Astrocyte of the cerebellum (primary cell): ENCODE measurements at regions of chr1 and their contacts with region 1.

Region 1: GRCh38 chr1:22814176-22815042 is 103.8 kb downstream of the EPHB2 start:
- DNase-seq: no peak
- H3K4me3 ChIP-seq: no peak overlapping the region
- CTCF ChIP-seq: no peak

Region 2: DNA sequence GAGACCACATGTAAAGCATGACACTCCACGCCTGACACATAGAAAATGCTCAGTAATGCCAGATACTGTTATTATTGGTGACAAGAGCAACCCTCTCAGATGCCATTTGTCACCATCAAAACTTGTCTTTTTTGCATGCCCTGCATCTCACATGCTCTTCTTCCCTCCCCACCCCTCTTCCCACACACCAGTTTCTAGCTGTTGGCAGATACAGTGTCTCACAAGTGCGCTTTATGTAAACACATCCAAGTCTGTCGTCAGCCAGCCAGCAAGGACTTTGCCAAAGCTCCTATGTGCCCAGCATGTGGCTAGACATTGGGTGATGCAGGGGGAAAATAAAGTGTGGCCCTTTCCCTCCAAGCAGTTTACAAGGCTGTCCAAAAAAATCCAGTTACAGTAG is 296.0 kb before region 1 on chr1:
- in situ Hi-C with region 1: no loop called
- DNase-seq: no peak
- H3K4me3 ChIP-seq: no peak overlapping the region
- CTCF ChIP-seq: no peak

Region 3: DNA sequence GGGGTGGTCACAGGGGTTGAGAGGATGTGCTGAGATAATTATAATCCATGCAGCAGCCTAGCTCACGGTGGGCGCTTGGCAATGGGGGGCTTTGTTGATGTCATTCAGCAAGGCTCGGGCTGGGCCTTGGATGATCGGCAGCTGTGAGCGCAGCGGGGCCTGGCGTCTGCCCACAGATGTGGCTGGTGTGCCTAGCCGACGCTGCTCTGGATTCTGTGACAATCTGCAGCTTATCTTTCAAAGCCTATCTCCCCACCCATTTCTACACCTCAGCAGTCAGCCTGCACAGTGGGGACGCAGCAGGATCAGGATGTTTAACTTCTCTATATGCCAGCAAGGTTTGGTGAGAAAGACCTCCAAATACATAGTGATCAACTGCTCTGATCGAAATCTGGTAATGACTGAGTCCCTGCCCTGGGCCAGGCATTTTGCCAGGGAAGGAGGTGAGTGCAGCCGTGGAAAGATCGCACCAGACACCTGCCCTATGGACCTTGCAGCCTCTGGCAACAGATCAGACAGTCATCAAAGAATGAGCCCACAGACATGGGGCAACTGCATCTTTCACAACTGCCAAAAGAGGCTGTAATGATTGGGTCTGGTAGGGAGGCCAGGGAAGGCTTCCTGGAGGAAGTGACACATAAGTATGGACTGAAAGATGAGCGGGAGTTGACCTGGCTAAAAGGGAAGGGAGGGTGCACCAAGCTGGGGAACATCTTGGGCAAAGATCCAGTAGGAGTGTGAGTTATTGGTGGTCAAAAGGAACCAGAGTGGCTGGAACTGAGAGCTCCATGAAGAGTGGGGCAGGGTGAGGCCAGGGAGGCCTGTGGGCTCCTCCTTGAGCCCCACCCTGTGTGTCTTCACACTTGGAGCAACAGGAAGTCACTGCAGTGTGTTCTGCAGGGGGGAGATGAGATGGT is 68.5 kb before region 1 on chr1:
- in situ Hi-C with region 1: no loop called
- DNase-seq: no peak
- H3K4me3 ChIP-seq: no peak overlapping the region
- CTCF ChIP-seq: no peak

Region 4: DNA sequence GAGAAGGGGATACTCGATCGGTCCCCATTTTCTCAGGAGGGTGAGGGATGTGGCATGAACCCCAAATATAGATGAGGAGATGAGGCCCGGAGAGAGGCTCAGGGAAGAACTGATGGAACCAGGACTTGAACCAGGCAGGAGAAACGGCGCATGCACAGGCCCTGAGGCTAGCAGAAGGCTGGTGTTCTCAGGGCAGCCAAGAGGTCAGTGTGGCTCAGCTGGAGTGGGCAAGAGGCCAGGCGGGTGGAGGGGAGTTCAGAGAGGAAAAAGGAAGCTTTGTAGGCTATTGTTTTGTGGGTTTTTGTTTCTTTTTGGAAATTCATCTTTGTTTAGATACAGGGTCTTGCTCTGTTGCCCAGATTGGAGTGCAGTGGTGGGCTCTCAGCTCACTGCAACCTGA is 36.3 kb after region 1 on chr1:
- in situ Hi-C with region 1: loop called (anchors 5 kb)
- DNase-seq: no peak
- H3K4me3 ChIP-seq: no peak overlapping the region
- CTCF ChIP-seq: no peak

Region 5: GRCh38 chr1:22861764-22862440 is 47.5 kb after region 1 on chr1:
- in situ Hi-C with region 1: no loop called
- DNase-seq: peak; percentile 32
- H3K4me3 ChIP-seq: no peak overlapping the region
- CTCF ChIP-seq: peak; percentile 94

Region 6: GRCh38 chr1:22963044-22963677 is 148.8 kb after region 1 on chr1:
- in situ Hi-C with region 1: no loop called
- DNase-seq: no peak
- H3K4me3 ChIP-seq: no peak overlapping the region
- CTCF ChIP-seq: no peak